Activated CD4-positive, alpha-beta T cell treated with anti-CD3 and anti-CD28 coated beads for 36 hours (primary cell): ENCODE measurements at regions of chr1 and their contacts with region 1.

Region 1: GRCh38 chr1:235367000-235367908 is at the start of gene TBCE:
- DNase-seq: peak; percentile 92
- ATAC-seq: peak; percentile 98
- H3K4me3 Mint-ChIP-seq: peak within 1 kb of the TSS; percentile 98
- H3K27ac Mint-ChIP-seq: peak within 1 kb of the TSS; percentile 93
- H3K4me1 Mint-ChIP-seq: peaks cover 22% of the 10 kb centered on the region
- H3K27me3 Mint-ChIP-seq: no peaks in the 10 kb centered on the region
- total RNA-seq, gene TBCE: 22.3 to 26.1 TPM

Region 2: DNA sequence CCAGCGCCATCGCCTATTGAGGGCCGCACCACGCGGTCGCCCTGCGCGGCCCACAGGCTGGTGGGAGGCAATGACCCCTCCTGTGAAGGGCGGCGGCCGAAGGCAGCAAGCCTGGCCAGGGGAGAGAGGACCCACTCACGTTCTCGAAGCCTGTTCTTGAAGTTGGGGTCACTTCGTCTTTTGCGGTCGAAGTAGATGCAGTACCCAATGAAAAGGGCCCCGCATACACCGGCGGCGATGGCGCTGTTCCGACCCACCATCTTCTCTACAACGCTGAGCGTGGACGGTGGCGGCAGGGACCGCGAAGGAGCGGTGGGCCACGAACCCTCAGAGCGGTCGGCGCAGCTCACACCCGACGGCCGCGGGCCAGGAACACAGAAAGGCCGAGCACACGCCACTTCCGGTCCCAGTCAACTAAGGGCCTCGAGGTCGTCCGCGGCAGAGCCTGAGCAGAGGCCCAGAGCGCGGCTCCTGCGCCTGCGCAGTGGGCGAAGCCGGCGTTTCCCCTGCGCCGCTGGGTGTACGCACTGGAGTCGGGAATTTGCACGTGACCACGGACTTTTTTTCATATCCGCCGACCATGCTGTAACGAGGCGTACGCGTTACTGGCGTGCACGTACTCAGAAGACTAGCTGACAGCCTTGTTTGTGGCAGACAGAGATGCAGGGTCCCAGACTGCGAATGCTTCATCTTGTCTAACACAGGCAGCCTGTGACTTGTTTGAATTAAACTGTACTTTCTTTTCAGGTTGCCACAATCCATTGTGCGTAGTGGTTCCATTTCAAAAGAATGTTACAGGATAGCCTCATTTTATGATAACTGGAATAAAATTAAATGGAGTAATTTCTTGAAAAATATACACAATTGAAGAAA is 238.6 kb before region 1 on chr1 and contains the start of gene TOMM20:
- CTCF ChIA-PET with region 1: no interaction called
- POLR2A ChIA-PET with region 1: no interaction called
- intact Hi-C with region 1: loop called in 1 of 2 experiments (anchors 1 kb)
- DNase-seq: peak; percentile 97
- ATAC-seq: peak; percentile 92
- H3K4me3 Mint-ChIP-seq: peak within 1 kb of the TSS; percentile 90
- H3K27ac Mint-ChIP-seq: peak within 1 kb of the TSS; percentile 98
- H3K4me1 Mint-ChIP-seq: peaks cover 41% of the 10 kb centered on the region
- H3K27me3 Mint-ChIP-seq: no peaks in the 10 kb centered on the region
- total RNA-seq, gene TOMM20: 62.1 to 148 TPM

Region 3: DNA sequence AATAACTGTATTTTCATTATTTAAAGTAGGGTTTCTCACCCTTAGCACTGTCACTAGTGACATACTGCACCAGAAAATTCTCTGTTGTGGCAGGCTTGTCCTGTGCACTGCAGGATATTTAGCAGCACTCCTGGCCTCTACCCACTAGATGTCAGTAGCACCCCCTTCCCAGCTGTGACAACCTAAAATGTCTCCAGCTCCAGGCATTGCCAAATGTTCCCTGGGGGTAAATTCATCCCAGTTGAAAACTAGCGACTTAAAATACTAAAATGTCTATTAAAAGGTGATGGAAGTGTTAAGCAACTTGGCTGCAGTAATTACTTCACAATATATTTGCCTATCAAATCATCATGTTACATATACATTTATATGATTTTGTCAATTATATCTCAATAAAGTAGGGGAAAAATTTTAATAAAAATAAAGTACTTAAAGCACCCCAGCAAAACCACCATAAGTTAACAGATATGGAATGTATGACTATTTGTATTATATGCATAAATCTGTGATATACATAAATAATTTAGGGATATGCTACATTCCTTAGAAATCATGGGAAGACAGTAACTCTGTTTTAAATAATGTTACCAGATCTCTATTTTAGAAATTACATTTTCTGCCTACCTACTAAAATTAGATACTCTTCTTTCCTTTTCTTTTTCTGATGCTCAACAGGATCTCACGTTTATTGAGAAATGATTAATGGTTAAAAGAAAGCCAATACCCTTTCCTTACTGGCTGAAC is 113.9 kb before region 1 on chr1:
- CTCF ChIA-PET with region 1: interaction called, 3 read pairs
- POLR2A ChIA-PET with region 1: no interaction called
- intact Hi-C with region 1: loop called in 1 of 2 experiments (anchors 5 kb)
- DNase-seq: peak; percentile 78
- ATAC-seq: peak; percentile 99
- H3K4me3 Mint-ChIP-seq: no peak overlapping the region
- H3K27ac Mint-ChIP-seq: no peak overlapping the region
- H3K4me1 Mint-ChIP-seq: peaks cover 31% of the 10 kb centered on the region
- H3K27me3 Mint-ChIP-seq: no peaks in the 10 kb centered on the region

Region 4: DNA sequence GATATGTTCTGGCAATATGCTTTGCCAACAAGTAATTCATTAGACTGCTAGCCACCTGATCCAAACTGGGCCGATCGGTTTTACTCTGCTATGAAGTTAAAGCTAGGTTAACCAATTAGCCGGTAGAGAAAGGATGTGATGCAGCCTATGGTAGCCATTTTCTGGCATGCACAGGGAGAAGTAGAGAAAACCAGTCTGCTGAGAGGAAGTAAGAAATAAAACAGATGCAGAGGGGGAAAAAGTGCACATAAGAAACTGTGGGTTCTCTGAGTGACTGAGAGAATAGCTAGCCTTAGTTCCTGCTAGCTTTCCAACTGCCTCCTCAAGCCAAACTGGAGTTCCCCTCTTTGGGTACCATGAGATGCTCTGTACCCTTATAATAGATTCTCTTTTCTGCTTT is 92.0 kb before region 1 on chr1:
- CTCF ChIA-PET with region 1: no interaction called
- POLR2A ChIA-PET with region 1: no interaction called
- intact Hi-C with region 1: no loop called
- DNase-seq: peak; percentile 19
- ATAC-seq: peak; percentile 74
- H3K4me3 Mint-ChIP-seq: no peak overlapping the region
- H3K27ac Mint-ChIP-seq: peak overlapping the region; percentile 64
- H3K4me1 Mint-ChIP-seq: peaks cover 71% of the 10 kb centered on the region
- H3K27me3 Mint-ChIP-seq: no peaks in the 10 kb centered on the region

Region 5: DNA sequence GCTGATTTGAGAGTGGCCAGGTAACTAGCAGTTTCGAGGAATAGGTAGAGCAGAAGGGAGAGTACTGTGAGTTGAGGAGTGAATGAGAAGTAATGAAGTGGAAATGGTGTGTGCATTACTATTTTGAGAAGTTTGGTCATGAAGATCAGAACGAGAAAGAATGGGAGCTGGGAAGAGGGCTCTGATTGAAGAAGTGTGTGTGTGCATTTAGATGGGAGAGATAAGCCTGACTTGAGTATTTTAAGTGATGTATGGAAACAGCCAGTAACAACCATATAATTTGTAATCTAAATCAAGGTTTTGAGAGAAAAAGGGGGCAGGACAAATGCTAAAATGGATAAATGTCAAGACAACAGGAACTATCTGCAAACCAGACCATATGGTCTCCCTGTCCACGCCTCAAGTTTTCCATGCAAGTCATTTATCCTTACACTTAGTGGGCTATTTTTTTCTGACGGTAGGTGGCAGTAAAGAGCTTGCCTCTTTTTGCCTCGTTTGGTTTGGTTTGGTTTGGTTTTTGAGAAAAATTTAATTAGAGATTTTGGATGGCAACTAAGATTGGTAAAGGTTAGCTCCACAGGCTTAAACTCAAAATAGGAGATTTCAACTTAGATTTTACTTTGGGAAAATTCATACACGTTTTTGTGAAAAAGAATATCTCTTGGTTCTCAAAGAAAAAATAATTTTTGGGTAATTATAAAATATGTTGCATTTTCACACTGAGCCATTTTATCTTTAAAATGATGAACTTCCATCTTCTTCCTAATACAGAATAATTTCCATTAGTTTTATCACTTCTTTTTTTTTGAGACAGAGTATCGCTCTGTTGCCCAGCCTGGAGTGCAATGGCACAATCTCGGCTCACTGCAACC is 146.5 kb after region 1 on chr1:
- CTCF ChIA-PET with region 1: no interaction called
- POLR2A ChIA-PET with region 1: no interaction called
- intact Hi-C with region 1: no loop called
- DNase-seq: peak; percentile 50
- ATAC-seq: peak; percentile 79
- H3K4me3 Mint-ChIP-seq: no peak overlapping the region
- H3K27ac Mint-ChIP-seq: no peak overlapping the region
- H3K4me1 Mint-ChIP-seq: peaks cover 4% of the 10 kb centered on the region
- H3K27me3 Mint-ChIP-seq: peaks cover 2% of the 10 kb centered on the region